ENCODE measurements at regions of chr6 and their contacts with region 1.

Region 1: DNA sequence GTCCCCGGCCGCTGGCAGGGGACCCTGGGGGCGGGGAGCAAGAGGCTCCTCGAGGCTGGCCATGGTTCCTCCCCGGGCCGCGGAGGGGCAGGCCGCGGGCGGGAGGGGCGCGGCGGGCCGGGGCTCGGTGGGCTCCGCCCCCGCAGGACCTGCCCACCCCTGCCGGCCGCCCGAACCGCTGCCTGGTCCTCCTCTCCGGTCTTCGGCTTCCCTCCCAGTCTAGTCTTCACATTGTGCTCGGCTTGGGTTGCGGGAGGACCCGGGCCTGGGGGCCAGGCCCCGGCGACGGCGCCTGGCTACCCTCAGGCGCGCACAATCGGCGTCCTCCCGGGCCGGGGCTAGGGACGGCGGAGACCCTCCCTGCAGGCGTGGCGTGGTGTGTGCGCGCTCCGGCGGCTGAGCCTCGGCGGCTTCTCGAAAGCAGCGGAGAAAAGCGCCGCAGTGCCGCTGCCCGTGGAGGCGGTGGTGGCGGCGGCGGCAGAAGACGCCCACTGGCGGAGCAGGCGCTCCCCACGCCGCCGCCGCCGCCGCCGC is at the start of gene PDE10A:
- DNase-seq: peak; percentile 79
- H3K4me3 Mint-ChIP-seq: peak within 1 kb of the TSS; percentile 100
- H3K27ac Mint-ChIP-seq: peak within 1 kb of the TSS; percentile 85
- H3K4me1 Mint-ChIP-seq: peaks cover 30% of the 10 kb centered on the region
- H3K27me3 Mint-ChIP-seq: no peaks in the 10 kb centered on the region
- CTCF ChIP-seq: no peak
- total RNA-seq, gene PDE10A: 22.5 and 23.7 TPM in 2 replicates

Region 2: DNA sequence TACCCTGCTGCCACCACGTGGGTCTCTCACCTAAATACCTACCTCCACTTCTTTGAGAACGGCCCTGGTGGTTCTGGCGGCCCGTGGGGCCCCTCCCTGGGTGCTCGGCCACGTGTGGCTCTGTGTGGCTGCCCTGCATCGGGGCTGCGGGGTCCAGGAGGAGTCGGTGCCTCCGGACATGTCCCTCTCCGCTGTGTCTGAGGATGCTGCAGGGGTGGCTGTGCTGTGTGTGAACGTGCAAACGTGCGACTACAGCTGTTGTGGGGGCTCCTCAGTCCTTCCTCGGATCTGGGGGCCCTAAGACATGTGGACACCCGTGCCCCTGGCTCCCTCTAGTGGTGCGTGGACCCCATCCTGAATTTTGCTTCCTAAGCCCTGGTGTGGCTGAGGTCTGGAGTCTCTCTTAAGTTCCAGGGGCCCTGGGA is 1556.5 kb before region 1 on chr6:
- CTCF ChIA-PET with region 1: interaction called, 10 read pairs
- intact Hi-C with region 1: no loop called
- DNase-seq: peak; percentile 28
- H3K4me3 Mint-ChIP-seq: no peak overlapping the region
- H3K27ac Mint-ChIP-seq: no peak overlapping the region
- H3K4me1 Mint-ChIP-seq: no peaks in the 10 kb centered on the region
- H3K27me3 Mint-ChIP-seq: no peaks in the 10 kb centered on the region
- CTCF ChIP-seq: no peak

Region 3: DNA sequence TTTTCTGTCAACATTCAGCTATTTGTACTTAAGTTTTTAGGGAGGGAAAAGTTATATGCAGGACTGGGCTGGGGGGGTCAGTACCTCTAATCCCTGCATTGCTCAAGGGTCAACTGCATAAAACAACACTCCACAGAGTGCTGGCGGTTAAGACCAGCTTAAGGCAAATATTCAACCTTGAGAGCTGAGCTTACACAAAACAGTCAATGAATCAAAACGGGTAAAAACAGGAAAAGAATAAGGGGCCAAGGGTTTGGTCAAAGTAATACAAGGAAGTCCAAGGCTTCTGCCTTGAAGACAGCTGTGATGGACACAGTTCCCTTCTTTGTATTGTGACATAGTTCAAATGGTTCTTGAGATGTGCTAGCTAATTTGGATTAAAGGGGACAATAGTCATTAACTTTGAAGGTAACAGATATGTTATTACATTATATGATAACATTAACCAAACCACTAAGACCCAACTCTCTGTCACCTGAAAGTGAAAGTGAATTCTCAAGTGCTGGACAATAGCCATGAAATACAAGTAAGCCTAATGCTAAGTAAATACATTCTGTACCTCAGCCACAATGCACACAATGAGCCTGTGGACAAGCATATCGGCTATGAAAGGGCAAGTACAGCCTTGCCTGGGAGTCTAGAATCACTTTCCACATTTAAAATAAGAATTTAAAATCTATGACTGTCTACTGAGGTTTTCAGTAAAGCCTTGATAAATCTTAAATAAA is 106.5 kb before region 1 on chr6:
- CTCF ChIA-PET with region 1: no interaction called
- intact Hi-C with region 1: loop called (anchors 1 kb)
- DNase-seq: peak; percentile 46
- H3K4me3 Mint-ChIP-seq: peak overlapping the region; percentile 54
- H3K27ac Mint-ChIP-seq: peak overlapping the region; percentile 42
- H3K4me1 Mint-ChIP-seq: peaks cover 47% of the 10 kb centered on the region
- H3K27me3 Mint-ChIP-seq: no peaks in the 10 kb centered on the region
- CTCF ChIP-seq: no peak

Region 4: DNA sequence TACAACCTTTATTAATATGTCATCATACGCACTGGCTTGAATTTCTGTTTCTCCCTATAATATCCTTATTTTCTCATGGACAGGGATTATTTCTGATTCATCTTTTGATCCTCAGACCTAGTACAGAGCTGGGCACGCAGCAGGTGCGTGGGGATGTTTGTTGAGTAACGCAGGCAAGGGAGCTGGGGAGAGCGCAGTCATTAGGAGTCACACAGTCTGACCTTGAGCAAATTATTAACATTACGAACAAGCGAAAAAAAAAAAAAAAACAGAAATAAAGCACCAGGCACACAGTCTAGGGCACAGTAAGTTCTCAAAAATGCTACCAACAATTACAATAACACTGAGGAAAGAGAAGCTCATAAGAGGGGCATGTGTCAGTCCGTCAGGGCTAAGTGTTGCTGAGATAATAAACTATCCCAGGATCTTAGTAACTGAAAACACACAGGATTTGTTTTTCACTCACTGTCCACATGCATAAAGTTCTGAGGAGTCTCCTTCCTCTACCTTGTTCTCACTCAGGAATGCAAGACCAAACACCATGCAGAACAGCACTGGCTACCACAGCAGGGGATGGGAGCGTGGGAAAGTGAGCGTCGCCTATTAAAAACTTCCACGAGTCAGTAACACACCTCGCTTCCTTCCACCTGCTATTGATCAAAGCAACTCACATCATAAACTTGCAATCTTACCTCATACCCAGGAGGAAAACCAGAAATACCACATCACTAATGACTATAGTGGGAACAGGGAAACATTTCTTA is 56.7 kb before region 1 on chr6:
- CTCF ChIA-PET with region 1: no interaction called
- intact Hi-C with region 1: loop called (anchors 5 kb)
- DNase-seq: peak; percentile 54
- H3K4me3 Mint-ChIP-seq: no peak overlapping the region
- H3K27ac Mint-ChIP-seq: no peak overlapping the region
- H3K4me1 Mint-ChIP-seq: peaks cover 16% of the 10 kb centered on the region
- H3K27me3 Mint-ChIP-seq: no peaks in the 10 kb centered on the region
- CTCF ChIP-seq: no peak

Region 5: DNA sequence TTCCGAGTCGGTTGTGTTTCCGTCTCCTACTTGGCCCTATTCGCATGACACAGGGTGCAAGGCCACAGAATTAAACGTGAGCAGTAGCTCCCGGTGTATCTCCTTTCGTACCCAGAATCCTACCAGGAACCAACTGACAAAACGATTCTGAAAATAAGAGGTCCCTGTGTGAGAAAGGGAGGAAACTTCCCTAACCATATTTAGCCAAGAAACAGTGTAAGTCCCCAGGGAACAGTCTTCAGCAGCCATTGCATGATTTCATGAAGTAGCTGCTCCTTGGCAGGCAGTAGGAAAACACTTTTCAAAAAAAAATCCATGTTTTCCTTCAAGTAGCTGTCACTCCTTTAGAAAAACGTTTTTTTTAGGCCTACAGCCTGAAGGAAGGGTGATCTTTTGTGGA is 46.7 kb before region 1 on chr6:
- CTCF ChIA-PET with region 1: no interaction called
- intact Hi-C with region 1: no loop called
- DNase-seq: no peak
- H3K4me3 Mint-ChIP-seq: no peak overlapping the region
- H3K27ac Mint-ChIP-seq: no peak overlapping the region
- H3K4me1 Mint-ChIP-seq: peaks cover 24% of the 10 kb centered on the region
- H3K27me3 Mint-ChIP-seq: no peaks in the 10 kb centered on the region
- CTCF ChIP-seq: no peak

Region 6: GRCh38 chr6:165649166-165650137 is 13.4 kb before region 1 on chr6:
- CTCF ChIA-PET with region 1: no interaction called
- intact Hi-C with region 1: no loop called
- DNase-seq: no peak
- H3K4me3 Mint-ChIP-seq: no peak overlapping the region
- H3K27ac Mint-ChIP-seq: no peak overlapping the region
- H3K4me1 Mint-ChIP-seq: peaks cover 31% of the 10 kb centered on the region
- H3K27me3 Mint-ChIP-seq: no peaks in the 10 kb centered on the region
- CTCF ChIP-seq: no peak

Region 7: DNA sequence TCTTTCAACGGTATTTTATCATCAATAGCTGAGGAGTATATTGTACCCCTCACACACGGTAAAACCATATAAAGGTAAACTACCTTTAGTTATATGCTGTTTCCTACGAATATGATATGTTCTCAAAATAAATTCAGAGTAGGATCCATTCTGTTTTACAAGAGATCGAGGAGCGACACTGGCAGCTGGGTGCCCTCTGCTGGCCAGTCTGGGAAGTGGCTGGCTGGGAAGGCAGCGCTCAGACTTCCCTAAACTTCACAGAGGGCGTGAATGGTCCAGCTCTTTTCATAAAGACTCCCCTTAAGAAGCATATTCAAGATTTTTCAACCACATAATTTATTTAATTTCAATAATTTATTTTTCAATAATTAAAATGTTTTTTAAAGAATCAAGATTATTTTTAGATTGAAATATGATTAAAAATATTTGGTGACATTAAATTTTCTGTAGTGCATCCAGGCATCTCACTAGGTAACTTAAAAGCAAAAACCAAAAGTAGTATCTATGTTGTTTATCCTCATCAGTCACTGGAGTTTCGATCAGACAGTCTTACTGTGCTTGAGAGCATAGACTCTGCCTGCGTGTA is 187.7 kb after region 1 on chr6:
- CTCF ChIA-PET with region 1: no interaction called
- intact Hi-C with region 1: loop called (anchors 10 kb)
- DNase-seq: peak; percentile 77
- H3K4me3 Mint-ChIP-seq: no peak overlapping the region
- H3K27ac Mint-ChIP-seq: no peak overlapping the region
- H3K4me1 Mint-ChIP-seq: peaks cover 18% of the 10 kb centered on the region
- H3K27me3 Mint-ChIP-seq: peaks cover 17% of the 10 kb centered on the region
- CTCF ChIP-seq: peak; percentile 91

Region 8: GRCh38 chr6:166308033-166308768 is 645.4 kb after region 1 on chr6 and contains the start of gene PRR18:
- CTCF ChIA-PET with region 1: no interaction called
- intact Hi-C with region 1: no loop called
- DNase-seq: peak; percentile 33
- H3K4me3 Mint-ChIP-seq: peak within 1 kb of the TSS; percentile 61
- H3K27ac Mint-ChIP-seq: no peak within 1 kb of the TSS
- H3K4me1 Mint-ChIP-seq: no peaks in the 10 kb centered on the region
- H3K27me3 Mint-ChIP-seq: peaks cover 48% of the 10 kb centered on the region
- CTCF ChIP-seq: no peak
- total RNA-seq, gene PRR18: 0.19 TPM in 1 of 2 replicates, not detected in the other

Measured in Calu3 (cell line).